MCF 10A (cell line): ENCODE measurements at regions of chr6 and their contacts with region 1.

Region 1: DNA sequence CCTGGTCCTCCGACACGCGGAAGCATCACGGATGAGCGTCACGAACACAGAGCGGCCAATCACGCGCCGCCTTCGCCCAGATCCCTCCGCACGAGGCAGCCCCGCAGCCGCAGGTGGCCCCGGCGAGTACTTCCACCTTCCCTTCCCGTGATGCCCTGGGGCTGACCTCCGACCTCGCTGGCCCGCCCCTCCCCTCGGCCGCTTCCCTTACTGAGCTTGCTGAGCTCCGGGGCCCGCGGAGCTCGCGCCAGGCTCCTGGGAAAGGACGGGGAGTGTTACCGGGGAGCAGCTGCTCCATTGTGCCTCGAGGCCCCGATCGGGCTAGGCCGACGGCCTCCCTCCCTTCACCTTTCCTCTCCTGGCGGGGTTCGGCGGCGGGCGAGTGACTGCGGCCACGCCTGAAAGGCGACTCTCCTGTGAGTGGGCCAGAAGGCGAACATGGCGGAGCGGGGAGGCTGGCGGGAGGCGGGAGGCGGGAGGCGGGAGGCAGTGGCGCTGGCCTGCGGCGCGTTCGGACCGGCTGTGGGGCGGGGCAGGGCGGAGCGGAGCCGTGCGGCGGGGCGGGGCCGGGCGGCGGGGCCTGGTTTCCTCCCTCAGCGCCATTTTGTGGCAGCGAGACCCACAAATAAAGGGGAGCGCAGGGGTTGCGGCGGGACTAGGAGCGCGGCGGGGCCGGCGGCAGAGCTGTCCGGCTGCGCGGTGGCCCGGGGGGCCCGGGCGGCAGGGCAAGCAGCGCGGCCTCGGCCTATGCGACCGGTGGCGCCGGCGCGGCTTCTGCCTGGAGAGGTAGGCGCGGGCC is at the start of gene WTAP:
- DNase-seq: peak; percentile 96
- H3K4me3 Mint-ChIP-seq: peak within 1 kb of the TSS; percentile 93
- H3K27ac Mint-ChIP-seq: peak within 1 kb of the TSS; percentile 98
- H3K4me1 Mint-ChIP-seq: peaks cover 17% of the 10 kb centered on the region
- H3K27me3 Mint-ChIP-seq: no peaks in the 10 kb centered on the region
- CTCF ChIP-seq: no peak
- total RNA-seq, gene WTAP: 116 and 142 TPM in 2 replicates

Region 2: DNA sequence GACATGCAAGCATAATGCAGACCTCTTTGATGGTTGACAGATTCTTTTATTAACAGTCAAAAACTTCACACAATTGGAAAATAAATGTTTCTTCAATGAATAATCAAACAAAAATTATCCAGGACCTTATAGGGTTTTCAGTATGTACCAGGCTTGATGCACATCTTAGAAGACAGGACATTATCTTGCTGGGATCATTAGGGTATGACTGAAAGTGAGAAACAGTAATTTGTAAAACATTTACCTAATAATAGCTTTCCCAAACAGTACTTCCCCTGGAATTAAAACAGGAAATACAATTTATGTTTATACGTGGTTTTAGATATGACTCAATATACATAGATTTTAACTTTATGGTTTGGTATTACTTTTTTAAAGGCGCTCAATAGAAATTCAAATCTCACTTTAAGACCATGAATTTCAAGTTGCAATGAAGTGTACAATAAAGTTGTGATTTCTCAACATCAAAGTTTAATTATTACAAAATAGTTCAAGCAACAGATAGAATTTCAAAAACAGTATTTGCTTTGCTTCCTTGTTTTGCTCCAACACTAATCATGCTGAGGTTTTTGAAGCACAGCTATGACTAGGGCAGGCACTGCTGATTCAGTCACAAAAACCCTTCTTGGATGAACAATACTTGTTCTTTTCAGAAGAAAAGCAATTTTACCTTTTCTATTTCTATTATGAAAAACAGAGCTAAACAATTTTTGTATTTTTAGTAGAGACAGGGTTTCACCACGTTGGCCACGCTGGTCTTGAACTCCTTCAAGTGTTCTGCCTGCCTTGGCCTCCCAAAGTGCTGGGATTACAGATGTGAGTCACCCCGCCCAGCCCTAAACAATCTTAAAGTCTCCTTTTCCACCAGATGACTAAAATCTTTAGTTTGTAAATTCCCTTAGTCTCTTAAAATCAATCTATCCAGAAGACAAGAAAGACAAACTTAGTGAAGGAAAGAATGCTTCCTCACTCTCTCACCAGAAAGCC is 47.7 kb before region 1 on chr6:
- CTCF ChIA-PET with region 1: no interaction called
- POLR2A ChIA-PET with region 1: interaction called, 29 read pairs
- intact Hi-C with region 1: no loop called
- DNase-seq: no peak
- H3K4me3 Mint-ChIP-seq: peak overlapping the region; percentile 41
- H3K27ac Mint-ChIP-seq: peak overlapping the region; percentile 27
- H3K4me1 Mint-ChIP-seq: peaks cover 9% of the 10 kb centered on the region
- H3K27me3 Mint-ChIP-seq: no peaks in the 10 kb centered on the region
- CTCF ChIP-seq: no peak

Region 3: DNA sequence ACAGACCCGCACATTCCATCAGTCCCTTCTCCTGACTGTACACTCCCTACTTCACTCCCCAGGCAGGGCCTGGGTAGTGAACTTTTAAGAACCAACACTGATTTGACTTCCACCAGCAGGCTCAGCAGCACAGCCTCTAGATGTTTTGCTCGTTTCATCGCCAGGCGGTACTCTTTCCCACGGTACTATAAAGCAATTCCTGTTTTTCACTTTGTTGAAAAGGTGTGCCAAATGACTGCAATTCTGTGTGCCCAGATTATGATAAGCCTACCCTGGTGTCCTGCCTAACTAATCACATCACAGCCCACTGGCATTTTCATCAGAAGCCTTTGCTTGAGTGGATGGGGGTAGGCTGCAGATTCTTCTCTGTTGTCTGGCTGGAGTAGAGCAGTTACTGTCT is 12.7 kb before region 1 on chr6:
- CTCF ChIA-PET with region 1: interaction called, 11 read pairs
- POLR2A ChIA-PET with region 1: interaction called, 200 read pairs
- intact Hi-C with region 1: no loop called
- DNase-seq: no peak
- H3K4me3 Mint-ChIP-seq: no peak overlapping the region
- H3K27ac Mint-ChIP-seq: no peak overlapping the region
- H3K4me1 Mint-ChIP-seq: peaks cover 38% of the 10 kb centered on the region
- H3K27me3 Mint-ChIP-seq: no peaks in the 10 kb centered on the region
- CTCF ChIP-seq: no peak

Region 4: GRCh38 chr6:159761873-159762680 is 35.0 kb after region 1 on chr6 and contains the start of gene ACAT2:
- CTCF ChIA-PET with region 1: no interaction called
- POLR2A ChIA-PET with region 1: interaction called, 59 read pairs
- intact Hi-C with region 1: no loop called
- DNase-seq: peak; percentile 96
- H3K4me3 Mint-ChIP-seq: peak within 1 kb of the TSS; percentile 88
- H3K27ac Mint-ChIP-seq: peak within 1 kb of the TSS; percentile 82
- H3K4me1 Mint-ChIP-seq: peaks cover 28% of the 10 kb centered on the region
- H3K27me3 Mint-ChIP-seq: no peaks in the 10 kb centered on the region
- CTCF ChIP-seq: no peak
- total RNA-seq, gene ACAT2: 13.4 and 46.0 TPM in 2 replicates

Region 5: DNA sequence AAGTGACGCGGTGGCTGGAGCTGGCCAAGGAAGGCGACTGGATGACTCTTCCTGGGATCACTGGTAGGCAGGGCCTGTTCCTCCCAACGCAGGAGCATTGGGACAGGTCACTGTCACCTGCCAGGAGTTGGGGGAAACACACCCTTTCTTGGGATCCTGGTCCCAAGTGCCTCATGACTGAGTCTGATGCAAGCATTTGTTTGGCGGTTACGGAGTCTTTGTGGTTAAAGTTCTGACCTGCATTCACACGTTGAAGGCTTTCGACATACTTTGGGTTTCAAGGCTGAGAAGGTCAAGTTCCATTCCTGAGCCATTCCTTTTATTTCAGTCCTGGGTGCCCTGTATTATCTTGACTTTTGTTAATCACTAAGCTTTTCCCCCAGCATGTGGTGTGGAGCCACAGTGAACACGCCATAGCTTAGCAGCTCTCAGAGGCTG is 78.9 kb after region 1 on chr6:
- CTCF ChIA-PET with region 1: no interaction called
- POLR2A ChIA-PET with region 1: interaction called, 10 read pairs
- intact Hi-C with region 1: no loop called
- DNase-seq: peak; percentile 86
- H3K4me3 Mint-ChIP-seq: no peak overlapping the region
- H3K27ac Mint-ChIP-seq: peak overlapping the region; percentile 49
- H3K4me1 Mint-ChIP-seq: peaks cover 16% of the 10 kb centered on the region
- H3K27me3 Mint-ChIP-seq: no peaks in the 10 kb centered on the region
- CTCF ChIP-seq: no peak

Region 6: DNA sequence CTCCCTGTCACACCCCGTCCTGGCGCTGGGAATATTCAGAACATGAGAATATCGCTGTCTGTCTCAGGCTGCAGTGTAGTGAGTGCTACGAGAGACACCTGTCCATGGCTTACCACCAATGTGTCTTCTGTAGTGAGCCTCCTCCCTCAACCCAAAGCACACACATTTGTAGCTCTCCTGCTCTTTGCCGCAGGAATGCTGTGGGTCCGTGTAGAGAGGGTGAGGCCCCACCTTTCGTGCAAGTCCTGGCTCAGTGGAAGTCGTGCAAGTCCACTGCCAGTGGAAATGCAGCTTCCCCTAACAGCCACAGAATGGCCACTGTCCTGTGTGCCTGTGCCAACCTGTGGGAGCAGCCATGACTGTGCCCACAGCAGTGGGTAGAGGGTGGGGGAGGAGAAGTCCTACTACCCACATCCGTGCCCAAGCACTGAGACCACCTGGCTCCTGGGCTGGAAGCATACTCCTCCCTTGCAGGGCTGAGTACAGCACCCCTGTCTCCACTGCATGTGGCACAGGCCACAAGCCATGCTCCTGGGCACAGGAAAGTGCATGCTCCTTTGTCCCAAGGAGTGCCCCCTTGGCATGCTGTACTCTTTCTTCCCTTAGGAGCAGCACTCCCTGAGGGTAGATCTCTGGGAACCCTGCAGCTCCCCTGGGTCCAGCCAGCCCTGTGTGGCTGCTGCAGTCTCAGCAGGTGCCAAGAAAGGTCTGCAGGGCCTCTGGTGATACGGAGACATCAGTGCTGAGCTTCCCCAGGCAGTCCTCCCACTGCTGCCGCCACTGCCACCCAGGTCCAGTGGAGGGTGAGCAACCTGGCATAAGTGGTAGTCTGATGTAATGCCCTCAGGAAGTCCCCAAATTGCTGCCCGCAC is 269.7 kb after region 1 on chr6:
- CTCF ChIA-PET with region 1: no interaction called
- POLR2A ChIA-PET with region 1: no interaction called
- intact Hi-C with region 1: no loop called
- DNase-seq: no peak
- H3K4me3 Mint-ChIP-seq: no peak overlapping the region
- H3K27ac Mint-ChIP-seq: no peak overlapping the region
- H3K4me1 Mint-ChIP-seq: peaks cover 51% of the 10 kb centered on the region
- H3K27me3 Mint-ChIP-seq: no peaks in the 10 kb centered on the region
- CTCF ChIP-seq: no peak

Region 7: GRCh38 chr6:160041608-160042007 is 314.5 kb after region 1 on chr6:
- CTCF ChIA-PET with region 1: interaction called, 5 read pairs
- POLR2A ChIA-PET with region 1: interaction called, 15 read pairs
- intact Hi-C with region 1: no loop called
- DNase-seq: peak; percentile 97
- H3K4me3 Mint-ChIP-seq: peak overlapping the region; percentile 77
- H3K27ac Mint-ChIP-seq: peak overlapping the region; percentile 66
- H3K4me1 Mint-ChIP-seq: peaks cover 58% of the 10 kb centered on the region
- H3K27me3 Mint-ChIP-seq: no peaks in the 10 kb centered on the region
- CTCF ChIP-seq: peak; percentile 34